ENCODE measurements at regions of chr2 and their contacts with region 1.

Region 1: DNA sequence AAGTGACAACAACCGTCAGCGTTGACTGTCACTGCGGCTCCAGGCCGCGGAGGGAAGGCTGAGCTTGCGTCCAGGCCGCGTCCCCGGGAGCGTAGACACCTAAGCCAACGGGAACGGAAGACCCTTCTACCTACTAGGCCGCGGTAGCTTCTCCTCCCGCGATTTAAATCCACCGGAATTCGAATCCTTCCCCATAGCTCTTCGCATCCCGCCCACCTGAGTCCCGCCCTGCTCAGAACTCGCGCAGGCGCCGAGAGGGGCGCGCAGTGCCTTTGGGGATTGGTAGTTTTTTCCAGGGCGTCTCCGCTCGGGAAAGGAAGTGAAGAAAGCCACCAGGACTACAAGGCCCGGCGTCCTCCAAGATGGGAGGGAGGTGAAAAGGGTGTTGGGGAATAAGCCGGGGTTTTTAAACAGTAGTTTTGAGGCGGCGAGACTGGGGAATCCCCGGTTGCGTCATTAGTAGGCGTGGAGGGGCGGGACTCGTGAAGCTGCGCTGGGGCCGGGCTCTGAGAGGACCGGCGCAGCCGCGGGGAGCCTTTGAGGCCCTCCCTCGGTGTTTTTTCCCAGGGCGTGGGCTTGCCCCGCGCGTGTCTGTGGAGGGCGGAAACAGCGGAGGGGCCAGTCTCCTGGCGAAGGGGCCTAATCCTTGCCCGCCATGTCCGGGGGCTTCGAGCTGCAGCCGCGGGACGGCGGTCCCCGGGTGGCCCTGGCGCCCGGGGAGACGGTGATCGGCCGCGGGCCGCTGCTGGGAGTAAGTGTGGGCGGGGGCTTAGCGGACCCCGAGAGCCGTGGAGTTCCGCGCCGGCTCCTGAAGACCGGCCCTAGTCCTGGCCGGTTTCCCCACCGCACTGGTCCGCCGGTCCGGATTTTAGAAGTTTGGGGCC is at the starts of genes APLF and FBXO48:
- DNase-seq: peak; percentile 95
- H3K4me3 ChIP-seq: peak within 1 kb of the TSS; percentile 99
- CTCF ChIP-seq: no peak

Region 2: GRCh38 chr2:67642053-67642397 is 825.3 kb before region 1 on chr2:
- CTCF ChIA-PET with region 1: no interaction called
- POLR2A ChIA-PET with region 1: no interaction called
- DNase-seq: no peak
- H3K4me3 ChIP-seq: no peak overlapping the region
- CTCF ChIP-seq: no peak

Region 3: DNA sequence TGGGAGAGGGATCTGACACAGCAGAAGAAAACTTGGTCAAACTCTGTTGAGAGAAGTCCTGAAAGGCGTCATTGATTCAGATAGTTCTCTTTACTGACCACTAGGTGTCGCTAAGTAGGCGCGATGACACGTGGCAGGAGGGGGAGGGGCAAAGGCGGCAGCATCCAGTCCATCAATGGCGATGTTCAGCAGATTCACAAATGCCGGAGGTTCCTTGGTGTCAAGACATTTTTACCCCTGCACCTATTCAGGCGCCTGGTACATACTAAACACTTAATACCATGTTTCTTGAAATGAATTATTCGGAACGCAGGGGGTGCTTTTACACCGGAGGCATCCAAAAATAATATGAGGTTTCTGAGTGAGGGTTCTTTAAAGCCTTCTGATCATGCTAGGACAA is 105.2 kb before region 1 on chr2:
- CTCF ChIA-PET with region 1: no interaction called
- POLR2A ChIA-PET with region 1: no interaction called
- DNase-seq: no peak
- H3K4me3 ChIP-seq: no peak overlapping the region
- CTCF ChIP-seq: peak; percentile 52

Region 4: GRCh38 chr2:68452168-68452900 is 15.0 kb before region 1 on chr2:
- CTCF ChIA-PET with region 1: interaction called, 21 read pairs
- POLR2A ChIA-PET with region 1: no interaction called
- DNase-seq: no peak
- H3K4me3 ChIP-seq: no peak overlapping the region
- CTCF ChIP-seq: no peak

Region 5: GRCh38 chr2:68594674-68595492 is 127.6 kb after region 1 on chr2:
- CTCF ChIA-PET with region 1: interaction called, 116 read pairs
- POLR2A ChIA-PET with region 1: no interaction called
- DNase-seq: no peak
- H3K4me3 ChIP-seq: no peak overlapping the region
- CTCF ChIP-seq: peak; percentile 61

Region 6: GRCh38 chr2:68715353-68716041 is 248.2 kb after region 1 on chr2:
- CTCF ChIA-PET with region 1: interaction called, 89 read pairs
- POLR2A ChIA-PET with region 1: no interaction called
- DNase-seq: no peak
- H3K4me3 ChIP-seq: no peak overlapping the region
- CTCF ChIP-seq: peak; percentile 75

Region 7: DNA sequence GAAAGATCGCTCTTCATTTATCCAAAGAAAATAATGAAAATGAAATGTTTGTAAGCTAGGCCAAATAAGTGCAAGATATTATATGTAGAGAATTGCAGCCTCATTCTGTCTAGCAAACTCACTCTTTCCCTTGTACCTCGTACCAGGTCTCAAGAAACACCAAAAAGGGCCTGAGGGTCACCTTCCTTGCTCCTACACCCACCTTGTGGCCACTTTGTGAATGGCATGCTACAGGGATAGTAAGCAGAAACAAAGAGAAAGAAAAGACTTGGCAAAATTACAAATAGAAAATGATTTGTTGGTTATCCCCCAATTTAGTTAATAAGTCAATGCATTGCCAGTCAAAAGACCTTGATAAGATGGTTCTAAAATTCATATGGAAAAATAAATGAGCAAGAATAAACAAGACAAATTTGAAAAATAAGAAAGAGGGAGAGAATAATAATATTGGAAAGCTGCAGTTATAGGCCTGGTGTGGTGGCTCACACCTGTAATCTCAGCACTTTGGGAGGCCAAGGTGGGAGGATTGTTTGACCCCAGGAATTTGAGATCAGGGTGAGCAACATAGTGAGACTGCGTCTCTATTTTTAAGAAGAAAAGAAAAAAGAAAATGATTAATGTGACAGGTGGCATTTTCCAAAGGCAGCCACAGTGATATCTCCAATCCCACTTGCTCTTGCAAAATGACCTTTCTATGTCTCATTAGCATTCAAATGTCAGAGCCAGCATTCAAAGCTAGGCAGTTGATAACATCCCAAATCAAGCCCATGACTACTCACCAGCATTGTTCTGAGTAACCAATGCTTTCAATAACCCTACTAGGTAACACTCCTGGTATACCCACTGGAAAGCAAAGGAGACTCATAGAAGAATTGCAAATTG is 442.7 kb after region 1 on chr2:
- CTCF ChIA-PET with region 1: interaction called, 48 read pairs
- POLR2A ChIA-PET with region 1: no interaction called
- DNase-seq: no peak
- H3K4me3 ChIP-seq: no peak overlapping the region
- CTCF ChIP-seq: peak; percentile 80